Activated CD4-positive, alpha-beta memory T cell treated with anti-CD3 and anti-CD28 coated beads for 36 hours (primary cell): ENCODE measurements at regions of chr17 and their contacts with region 1.

Region 1: GRCh38 chr17:80147035-80147836 is at the start of gene EIF4A3:
- DNase-seq: peak; percentile 99
- H3K4me3 Mint-ChIP-seq: peak within 1 kb of the TSS; percentile 94
- H3K27ac Mint-ChIP-seq: peak within 1 kb of the TSS; percentile 93
- H3K4me1 Mint-ChIP-seq: peaks cover 36% of the 10 kb centered on the region
- H3K27me3 Mint-ChIP-seq: no peaks in the 10 kb centered on the region
- total RNA-seq, gene EIF4A3: 111 to 115 TPM

Region 2: DNA sequence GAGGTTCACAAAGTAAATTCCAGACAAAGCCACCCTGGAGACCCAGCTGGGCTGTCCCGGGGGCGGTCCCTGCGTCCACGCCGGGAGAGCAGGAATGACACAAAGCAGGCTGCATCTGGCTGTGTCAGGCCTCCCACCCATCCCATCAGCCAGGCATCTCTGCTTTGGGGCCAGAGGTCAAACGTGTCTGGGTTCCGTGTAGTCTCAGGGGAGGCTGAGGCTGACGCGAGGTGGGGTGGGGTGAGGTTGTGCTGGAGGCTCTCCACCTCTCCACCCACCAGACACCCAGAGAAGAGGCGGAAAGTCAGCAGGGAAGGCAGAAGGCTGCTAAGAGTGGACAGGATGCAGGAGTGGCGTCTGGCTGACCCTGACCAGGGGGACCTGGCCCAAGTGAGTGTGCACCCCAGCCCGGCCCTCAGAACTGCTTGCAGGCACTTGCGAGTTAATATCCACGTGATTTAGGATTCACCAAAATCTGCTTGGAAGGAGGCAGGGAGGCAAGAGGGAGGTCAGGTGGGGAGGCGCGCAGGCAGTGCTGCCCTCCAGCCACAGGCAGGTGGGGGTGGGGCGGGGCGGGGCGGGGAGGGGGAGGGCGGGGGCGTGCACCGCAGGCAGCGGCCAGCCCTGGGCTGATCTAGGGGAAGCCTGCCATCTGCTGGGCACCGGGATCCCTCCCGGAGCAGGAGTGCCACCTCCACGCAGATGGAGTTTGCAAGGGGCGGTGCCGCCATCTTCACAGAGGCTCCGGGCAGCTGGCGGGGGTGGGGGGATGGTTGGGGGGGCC is 155.9 kb before region 1 on chr17:
- CTCF ChIA-PET with region 1: no interaction called
- POLR2A ChIA-PET with region 1: no interaction called
- intact Hi-C with region 1: loop called (anchors 10 kb)
- DNase-seq: peak; percentile 91
- H3K4me3 Mint-ChIP-seq: peak overlapping the region; percentile 71
- H3K27ac Mint-ChIP-seq: no peak overlapping the region
- H3K4me1 Mint-ChIP-seq: peaks cover 26% of the 10 kb centered on the region
- H3K27me3 Mint-ChIP-seq: no peaks in the 10 kb centered on the region

Region 3: GRCh38 chr17:80187515-80187941 is 40.3 kb after region 1 on chr17:
- CTCF ChIA-PET with region 1: no interaction called
- POLR2A ChIA-PET with region 1: no interaction called
- intact Hi-C with region 1: no loop called
- DNase-seq: no peak
- H3K4me3 Mint-ChIP-seq: no peak overlapping the region
- H3K27ac Mint-ChIP-seq: no peak overlapping the region
- H3K4me1 Mint-ChIP-seq: no peaks in the 10 kb centered on the region
- H3K27me3 Mint-ChIP-seq: peaks cover 7% of the 10 kb centered on the region

Region 4: GRCh38 chr17:80414803-80415625 is 267.8 kb after region 1 on chr17 and contains the start of gene ENDOV:
- CTCF ChIA-PET with region 1: no interaction called
- POLR2A ChIA-PET with region 1: no interaction called
- intact Hi-C with region 1: loop called (anchors 1 kb)
- DNase-seq: peak; percentile 95
- H3K4me3 Mint-ChIP-seq: peak within 1 kb of the TSS; percentile 82
- H3K27ac Mint-ChIP-seq: peak within 1 kb of the TSS; percentile 57
- H3K4me1 Mint-ChIP-seq: peaks cover 20% of the 10 kb centered on the region
- H3K27me3 Mint-ChIP-seq: peaks cover 10% of the 10 kb centered on the region
- total RNA-seq, gene ENDOV: 16.1 to 16.3 TPM